CD4-positive, alpha-beta memory T cell (primary cell): ENCODE measurements at regions of chr1 and their contacts with region 1.

Region 1: DNA sequence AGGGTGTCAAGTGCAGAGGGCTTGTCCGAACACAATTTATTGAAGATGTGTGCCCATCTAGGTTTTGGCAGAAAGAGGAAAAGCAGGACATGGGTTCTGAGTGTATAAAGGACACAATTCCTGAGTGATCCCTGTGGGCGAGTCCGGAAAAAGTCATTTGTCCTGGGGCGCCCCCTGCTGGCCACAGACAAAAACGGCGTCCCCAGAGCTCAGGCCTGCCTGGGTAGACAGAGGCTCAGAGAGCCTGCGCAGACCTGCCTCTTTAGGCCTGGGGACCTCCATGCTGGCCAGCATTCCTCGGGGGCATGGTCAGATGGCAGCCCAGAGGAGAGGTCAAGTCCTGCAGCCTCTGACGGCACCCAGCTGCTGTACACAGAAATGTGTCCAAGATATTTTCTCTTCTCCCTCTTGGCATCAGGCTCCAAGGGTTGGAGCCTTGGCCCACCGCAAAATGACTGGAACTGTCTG is 65.5 kb upstream of the LRP8 start:
- DNase-seq: peak; percentile 49 to 71 (median 52)
- H3K4me3 ChIP-seq: no peak overlapping the region
- H3K4me3 Mint-ChIP-seq: peak overlapping the region in 1 of 8 donors; percentile 31
- H3K27ac ChIP-seq: no peak overlapping the region
- H3K27ac Mint-ChIP-seq: peak overlapping the region in 3 of 7 donors; percentile 13 to 29 (median 23)
- H3K4me1 ChIP-seq: peaks cover 5% of the 10 kb centered on the region
- H3K4me1 Mint-ChIP-seq: peaks cover 0 to 8% (median 2%) of the 10 kb centered on the region in 4 donors
- H3K27me3 ChIP-seq: no peaks in the 10 kb centered on the region
- H3K27me3 Mint-ChIP-seq: no peaks in the 10 kb centered on the region

Region 2: DNA sequence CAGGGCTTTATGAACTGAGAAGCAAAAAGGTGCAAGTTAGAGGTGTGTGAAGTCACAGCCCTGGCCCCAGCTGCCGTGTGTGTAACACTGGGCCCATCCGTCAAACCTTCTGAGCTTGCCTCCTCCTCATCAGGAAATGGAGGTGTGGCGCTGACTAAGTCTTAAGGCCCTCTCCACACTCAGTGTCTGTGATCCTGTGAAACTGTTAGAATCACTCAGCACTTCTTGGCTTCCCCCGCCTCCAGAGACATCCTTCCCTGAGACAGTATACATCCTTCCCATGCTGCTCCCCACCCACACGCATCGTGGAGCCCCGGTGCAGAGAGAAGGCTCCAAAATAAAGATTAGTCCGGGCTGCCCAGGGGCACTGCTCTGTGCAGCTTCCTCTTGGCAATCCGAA is 98.8 kb before region 1 on chr1:
- CTCF ChIA-PET with region 1: interaction called, 14 read pairs
- POLR2A ChIA-PET with region 1: no interaction called
- intact Hi-C with region 1: no loop called
- DNase-seq: peak in 4 of 5 donors; percentile 16 to 27 (median 22)
- H3K4me3 ChIP-seq: no peak overlapping the region
- H3K4me3 Mint-ChIP-seq: peak overlapping the region in 5 of 8 donors; percentile 12 to 65 (median 50)
- H3K27ac ChIP-seq: peak overlapping the region; percentile 1
- H3K27ac Mint-ChIP-seq: peak overlapping the region in 6 of 7 donors; percentile 49 to 93 (median 86)
- H3K4me1 ChIP-seq: peaks cover 49% of the 10 kb centered on the region
- H3K4me1 Mint-ChIP-seq: peaks cover 20 to 60% (median 40%) of the 10 kb centered on the region in 4 donors
- H3K27me3 ChIP-seq: no peaks in the 10 kb centered on the region
- H3K27me3 Mint-ChIP-seq: no peaks in the 10 kb centered on the region

Region 3: DNA sequence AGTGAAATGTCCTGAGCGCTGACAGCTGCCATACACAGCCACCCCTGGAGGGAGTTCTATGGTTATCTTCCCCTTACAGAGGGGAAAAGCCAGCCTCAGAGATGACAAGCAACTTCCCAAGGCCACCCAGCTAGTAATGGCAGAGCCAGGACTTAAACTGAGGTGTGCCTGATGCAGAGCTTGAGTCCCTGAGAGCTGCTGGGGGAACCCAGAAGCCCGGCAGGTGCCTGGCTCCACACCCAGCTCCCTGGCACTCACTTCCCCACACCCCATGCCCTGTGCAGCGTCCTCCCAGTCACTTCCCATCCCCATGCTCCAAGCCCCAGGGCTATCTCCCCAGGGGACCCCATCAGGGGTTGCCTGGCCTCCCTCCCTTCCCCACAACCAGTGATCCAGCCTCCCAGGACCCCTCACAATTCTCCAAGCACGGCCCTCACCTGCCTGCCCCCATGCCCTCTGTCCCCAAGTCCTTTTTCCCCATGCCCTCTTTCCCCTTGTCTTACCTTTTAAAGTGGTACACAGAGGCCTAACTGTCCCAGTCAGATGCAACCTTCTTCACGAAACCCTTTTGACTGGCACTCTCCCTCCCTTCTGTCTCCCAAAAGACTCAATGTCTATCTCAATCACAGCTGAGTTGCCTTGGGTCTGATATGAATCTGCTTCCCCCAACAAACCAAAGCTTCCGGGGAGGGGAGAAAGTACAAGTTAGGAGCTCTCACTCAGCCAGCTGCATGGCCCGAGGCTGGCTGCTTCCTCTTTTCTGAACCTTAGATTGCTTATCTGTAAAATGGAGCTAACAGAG is 25.7 kb before region 1 on chr1:
- CTCF ChIA-PET with region 1: interaction called, 17 read pairs
- POLR2A ChIA-PET with region 1: no interaction called
- intact Hi-C with region 1: no loop called
- DNase-seq: peak; percentile 27 to 57 (median 41)
- H3K4me3 ChIP-seq: peak overlapping the region in 1 of 2 donors; percentile 39
- H3K4me3 Mint-ChIP-seq: peak overlapping the region; percentile 87 to 96 (median 91)
- H3K27ac ChIP-seq: peak overlapping the region; percentile 10
- H3K27ac Mint-ChIP-seq: peak overlapping the region; percentile 61 to 98 (median 93)
- H3K4me1 ChIP-seq: peaks cover 28% of the 10 kb centered on the region
- H3K4me1 Mint-ChIP-seq: peaks cover 11 to 31% (median 22%) of the 10 kb centered on the region in 4 donors
- H3K27me3 ChIP-seq: no peaks in the 10 kb centered on the region
- H3K27me3 Mint-ChIP-seq: no peaks in the 10 kb centered on the region

Region 4: GRCh38 chr1:53470155-53470554 is 76.8 kb after region 1 on chr1:
- CTCF ChIA-PET with region 1: interaction called, 8 read pairs
- POLR2A ChIA-PET with region 1: no interaction called
- intact Hi-C with region 1: loop called (anchors 5 kb)
- DNase-seq: no peak
- H3K4me3 ChIP-seq: no peak overlapping the region
- H3K4me3 Mint-ChIP-seq: no peak overlapping the region
- H3K27ac ChIP-seq: no peak overlapping the region
- H3K27ac Mint-ChIP-seq: no peak overlapping the region
- H3K4me1 ChIP-seq: no peaks in the 10 kb centered on the region
- H3K4me1 Mint-ChIP-seq: peaks cover 0 to 2% (median under 1%) of the 10 kb centered on the region in 4 donors
- H3K27me3 ChIP-seq: no peaks in the 10 kb centered on the region
- H3K27me3 Mint-ChIP-seq: no peaks in the 10 kb centered on the region

Region 5: GRCh38 chr1:53681977-53682685 is 288.8 kb after region 1 on chr1:
- CTCF ChIA-PET with region 1: interaction called, 3 read pairs
- POLR2A ChIA-PET with region 1: no interaction called
- intact Hi-C with region 1: loop called (anchors 5 kb)
- DNase-seq: peak in 4 of 5 donors; percentile 19 to 22 (median 20)
- H3K4me3 ChIP-seq: no peak overlapping the region
- H3K4me3 Mint-ChIP-seq: peak overlapping the region in 7 of 8 donors; percentile 27 to 72 (median 45)
- H3K27ac ChIP-seq: no peak overlapping the region
- H3K27ac Mint-ChIP-seq: peak overlapping the region in 1 of 7 donors; percentile 66
- H3K4me1 ChIP-seq: peaks cover 5% of the 10 kb centered on the region
- H3K4me1 Mint-ChIP-seq: peaks cover 5 to 7% (median 6%) of the 10 kb centered on the region in 4 donors
- H3K27me3 ChIP-seq: no peaks in the 10 kb centered on the region
- H3K27me3 Mint-ChIP-seq: peaks cover 16 to 18% of the 10 kb centered on the region in 2 donors